ENCODE measurements at regions of chr9 and their contacts with region 1.

Region 1: DNA sequence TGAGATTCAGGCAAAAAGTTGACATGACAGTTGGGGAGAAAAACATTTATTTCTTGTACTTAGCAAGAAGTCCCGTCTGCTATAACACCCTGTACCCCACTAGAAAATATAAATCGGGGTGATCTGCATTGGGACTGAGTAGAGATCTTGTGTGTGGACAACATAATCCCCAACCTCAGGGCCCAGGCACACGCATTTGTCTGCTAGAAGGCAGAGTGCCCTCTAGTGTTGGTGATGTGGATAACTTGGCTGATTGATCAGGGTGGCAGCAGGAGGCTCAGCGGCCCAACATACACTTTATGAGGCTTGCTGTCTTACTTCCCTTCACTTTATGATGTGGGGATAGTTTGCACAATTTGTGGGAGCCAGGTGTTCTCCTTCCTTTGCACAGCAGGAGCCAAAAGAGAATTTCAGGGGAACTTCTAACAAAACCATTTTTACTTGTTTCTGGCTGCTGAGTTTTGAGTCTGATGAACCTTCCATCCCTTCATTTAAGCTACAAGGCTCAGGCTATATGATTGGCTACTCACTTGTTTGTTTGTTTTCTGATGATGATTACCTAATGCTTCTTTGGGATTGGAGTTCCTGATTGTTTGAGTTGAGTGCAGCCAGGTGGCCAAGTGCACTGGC is 263.2 kb downstream of the DMAC1 start:
- DNase-seq: peak in 4 of 10 donors; percentile 12 to 83 (median 36)

Region 2: DNA sequence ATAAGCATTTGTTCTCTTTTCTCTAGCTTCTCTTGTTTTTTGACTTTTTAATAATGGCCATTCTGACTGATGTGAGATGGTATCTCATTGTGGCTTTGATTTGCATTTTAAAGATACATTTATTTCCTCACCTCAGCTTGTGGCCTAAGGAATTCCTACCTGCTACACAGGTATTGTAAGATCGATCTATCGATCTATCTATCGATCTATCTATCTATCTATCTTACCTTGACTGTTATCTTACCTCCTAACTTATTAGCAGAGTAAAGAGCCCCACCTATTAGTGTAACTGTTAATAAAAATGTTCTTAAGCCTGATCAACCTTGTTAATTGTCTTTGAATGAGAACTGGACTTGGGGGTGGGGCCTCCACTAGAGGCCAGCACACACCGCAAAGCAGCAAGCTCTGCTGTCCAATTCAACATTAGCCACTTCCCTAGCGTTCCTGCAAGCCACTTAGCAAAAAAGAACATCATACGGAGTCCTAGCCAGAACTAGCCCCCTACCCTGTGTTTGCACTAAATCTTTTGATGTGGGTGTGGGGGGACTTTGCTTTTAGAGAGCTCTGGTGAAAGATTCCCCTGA is 262.9 kb before region 1 on chr9:
- intact Hi-C with region 1: loop called (anchors 2 kb)
- DNase-seq: peak in 4 of 10 donors; percentile 24 to 89 (median 42)

Region 3: GRCh38 chr9:7402334-7403027 is 133.9 kb before region 1 on chr9:
- intact Hi-C with region 1: loop called (anchors 2 kb)
- DNase-seq: no peak

Region 4: GRCh38 chr9:7636838-7637467 is 100.5 kb after region 1 on chr9:
- intact Hi-C with region 1: no loop called
- DNase-seq: no peak

Measured in posterior cingulate gyrus (tissue), 11 donors.